HEK293 (cell line): ENCODE measurements at regions of chr2 and their contacts with region 1.

Region 1: GRCh38 chr2:47688561-47688960 is 94.4 kb upstream of the MSH6 start:
- H3K4me3 ChIP-seq: no peak overlapping the region
- H3K27ac ChIP-seq: no peak overlapping the region
- H3K4me1 ChIP-seq: no peaks in the 10 kb centered on the region
- CTCF ChIP-seq: no peak

Region 2: DNA sequence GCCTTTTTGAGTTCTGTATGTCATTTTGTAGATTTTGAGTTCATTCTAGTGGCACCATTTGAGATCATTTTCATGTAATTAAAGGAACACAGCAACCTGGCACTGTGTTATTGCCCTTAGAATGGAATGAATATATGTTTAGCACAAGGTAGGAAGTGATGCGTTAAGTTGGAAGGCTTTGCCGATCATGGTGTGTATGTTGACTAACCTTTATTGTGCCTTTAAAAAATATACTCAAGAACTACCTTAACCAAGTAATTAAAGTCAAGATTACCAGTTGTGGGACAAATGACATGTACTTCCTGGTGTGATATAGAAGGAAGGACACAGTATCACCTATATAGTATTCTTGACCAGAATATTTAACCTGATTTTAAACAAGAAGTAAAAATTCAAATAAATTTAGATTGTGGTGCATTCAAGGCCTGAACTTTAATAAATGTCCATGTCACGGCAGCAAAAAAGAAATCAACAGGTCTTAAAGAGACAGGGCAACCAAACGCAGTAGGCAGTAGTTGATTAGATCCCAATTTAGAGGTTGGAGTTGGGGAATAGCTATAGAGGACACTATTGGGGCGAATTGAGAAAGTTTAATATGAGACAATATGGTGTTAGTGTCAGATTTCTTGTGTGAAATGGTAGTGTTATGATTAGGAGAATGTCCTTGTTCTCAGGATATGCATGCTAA is 217.0 kb before region 1 on chr2:
- CTCF ChIA-PET with region 1: no interaction called
- POLR2A ChIA-PET with region 1: interaction called, 11 read pairs
- H3K4me3 ChIP-seq: no peak overlapping the region
- H3K27ac ChIP-seq: no peak overlapping the region
- H3K4me1 ChIP-seq: no peaks in the 10 kb centered on the region
- CTCF ChIP-seq: no peak